Natural killer cell (primary cell): ENCODE measurements at regions of chr19 and their contacts with region 1.

Region 1: DNA sequence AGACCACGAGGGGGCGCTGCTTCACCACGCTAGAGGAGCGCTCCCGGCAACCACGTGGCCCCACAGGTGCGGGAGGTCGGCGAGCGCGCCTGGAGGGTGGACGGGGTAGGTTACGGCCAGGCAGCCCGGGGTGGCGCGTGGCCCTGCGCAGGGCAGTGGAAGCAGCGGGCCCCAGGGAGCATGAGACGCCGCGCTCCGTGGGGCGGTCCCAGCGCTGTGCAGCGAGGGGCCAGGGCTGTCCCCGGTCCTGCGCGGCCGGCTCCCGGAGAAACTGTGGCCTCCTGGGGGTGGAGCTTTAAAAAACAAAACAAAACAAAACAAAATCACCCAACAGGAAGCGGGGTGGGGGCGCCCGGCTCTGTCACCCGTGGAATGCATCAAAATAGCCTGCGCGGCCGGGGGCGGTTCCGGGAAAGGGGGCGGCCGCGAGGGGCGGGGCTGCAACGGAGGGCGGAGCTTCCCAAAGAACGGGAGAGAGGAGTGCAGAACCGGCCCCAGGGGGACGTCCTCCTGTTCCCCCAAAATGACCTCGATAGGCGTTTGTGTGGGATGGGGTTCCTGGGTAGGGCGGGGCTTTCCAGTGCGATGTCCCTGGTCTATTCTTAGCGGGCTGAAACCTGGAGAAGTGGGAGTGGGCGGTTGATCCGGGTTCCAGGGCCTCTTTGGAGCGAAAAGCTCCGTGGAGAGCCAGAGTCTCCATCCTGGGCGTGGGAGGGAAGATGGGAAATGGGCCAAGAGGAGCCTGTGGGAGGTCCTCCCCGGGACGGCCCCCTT is 27.3 kb downstream of the NUMBL start:
- DNase-seq: peak; percentile 95 to 96
- ATAC-seq: peak; percentile 83 to 96 (median 89)
- H3K4me3 ChIP-seq: peak overlapping the region; percentile 55
- H3K4me3 Mint-ChIP-seq: peak overlapping the region; percentile 85
- H3K27ac ChIP-seq: peak overlapping the region; percentile 52
- H3K27ac Mint-ChIP-seq: peak overlapping the region; percentile 60 to 83
- H3K4me1 ChIP-seq: peaks cover 15% of the 10 kb centered on the region
- H3K4me1 Mint-ChIP-seq: peaks cover 0 to 17% of the 10 kb centered on the region in 2 donors
- H3K27me3 ChIP-seq: no peaks in the 10 kb centered on the region
- H3K27me3 Mint-ChIP-seq: no peaks in the 10 kb centered on the region
- CTCF ChIP-seq: peak; percentile 42

Region 2: DNA sequence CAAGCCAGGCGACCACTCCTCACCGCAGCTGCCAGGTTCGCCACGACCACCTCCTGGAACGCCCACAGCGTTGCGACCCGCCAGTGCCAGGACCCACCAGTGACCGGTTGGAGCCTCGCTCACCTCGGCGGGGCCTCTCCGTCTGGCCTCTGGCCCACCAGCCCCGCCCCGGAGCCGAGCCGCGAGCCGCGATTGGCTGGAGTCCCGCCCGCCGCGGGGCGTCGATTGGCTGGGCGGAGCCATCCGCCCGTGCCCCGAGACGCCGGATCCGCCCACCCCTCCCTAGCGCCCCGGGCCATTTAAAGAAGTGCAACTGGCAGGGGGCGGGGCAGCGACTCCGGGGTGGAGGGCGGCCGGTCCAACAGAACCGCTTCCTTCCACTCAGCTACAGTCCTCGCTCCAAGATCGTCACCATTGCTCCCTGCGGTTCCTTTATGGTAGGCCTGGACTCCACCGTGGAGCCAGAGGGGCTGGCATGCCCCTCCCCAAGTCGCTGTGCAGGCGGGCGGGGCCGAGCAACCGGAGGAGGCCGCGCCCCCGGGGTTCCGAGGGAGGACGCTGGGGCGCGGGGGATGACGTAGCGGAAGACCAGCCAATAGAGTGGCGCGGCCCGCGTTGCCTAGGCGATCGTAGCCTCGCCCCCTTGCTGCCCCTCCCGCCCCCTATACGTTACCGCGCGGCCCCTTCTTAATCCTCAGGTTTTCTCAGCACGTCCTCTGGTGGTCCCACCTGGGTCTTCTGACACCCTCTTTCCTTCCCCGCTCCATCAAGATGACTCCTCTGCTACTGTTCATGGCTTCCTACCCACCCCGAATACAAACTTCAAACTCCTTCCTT is 218.7 kb before region 1 on chr19 and contains the start of gene SERTAD3:
- intact Hi-C with region 1: no loop called
- DNase-seq: peak; percentile 98
- ATAC-seq: peak; percentile 70 to 87 (median 74)
- H3K4me3 ChIP-seq: peak within 1 kb of the TSS; percentile 91
- H3K4me3 Mint-ChIP-seq: peak within 1 kb of the TSS; percentile 98
- H3K27ac ChIP-seq: peak within 1 kb of the TSS; percentile 89
- H3K27ac Mint-ChIP-seq: peak within 1 kb of the TSS; percentile 92 to 97
- H3K4me1 ChIP-seq: peaks cover 13% of the 10 kb centered on the region
- H3K4me1 Mint-ChIP-seq: peaks cover 25 to 29% of the 10 kb centered on the region in 2 donors
- H3K27me3 ChIP-seq: no peaks in the 10 kb centered on the region
- H3K27me3 Mint-ChIP-seq: no peaks in the 10 kb centered on the region
- CTCF ChIP-seq: no peak
- total RNA-seq, gene SERTAD3: 57.3 to 102 (median 83.3) TPM

Region 3: DNA sequence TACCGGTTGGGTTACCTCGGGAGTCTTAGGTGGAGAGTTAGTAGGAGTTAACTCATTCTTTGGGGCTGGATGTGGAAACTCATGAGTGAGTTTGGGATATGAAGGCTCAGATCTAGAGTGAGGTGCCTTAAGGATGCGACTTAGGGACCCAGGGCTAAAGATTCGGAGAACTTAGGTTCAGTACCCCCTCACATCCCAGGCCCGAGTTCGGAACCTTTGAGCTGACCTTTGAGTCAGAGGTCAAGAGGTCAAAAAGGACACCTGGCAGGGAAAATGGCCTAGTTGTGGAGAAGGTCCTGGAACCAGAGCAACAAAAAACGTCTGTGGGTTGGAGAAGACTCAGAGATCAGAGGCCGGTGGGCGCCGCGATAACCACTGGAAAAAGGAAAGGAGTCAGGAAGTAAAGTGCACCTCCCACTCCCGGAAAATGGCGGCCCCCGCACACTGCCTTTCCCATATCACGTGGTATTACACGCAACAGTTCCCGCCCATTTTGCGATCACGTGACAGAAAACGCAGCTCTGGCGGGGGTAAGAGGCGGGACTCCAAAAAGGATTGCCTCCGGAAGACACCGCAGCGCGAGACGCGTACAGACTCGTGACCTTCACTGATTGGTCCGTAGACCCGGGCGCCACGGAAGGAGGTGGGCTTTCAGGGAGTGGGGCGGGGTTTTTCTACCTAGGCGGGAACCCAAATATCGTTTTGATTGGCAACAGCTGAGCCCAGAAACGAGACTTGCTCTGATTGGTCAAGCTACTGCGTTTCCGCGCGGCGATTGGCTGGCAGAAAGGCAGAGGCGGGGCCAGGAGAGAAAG is 87.2 kb after region 1 on chr19 and contains the start of gene ACTMAP:
- intact Hi-C with region 1: loop called (anchors 2 kb)
- DNase-seq: peak; percentile 100
- ATAC-seq: peak; percentile 87 to 96 (median 88)
- H3K4me3 ChIP-seq: peak within 1 kb of the TSS; percentile 73
- H3K4me3 Mint-ChIP-seq: peak within 1 kb of the TSS; percentile 99
- H3K27ac ChIP-seq: peak within 1 kb of the TSS; percentile 92
- H3K27ac Mint-ChIP-seq: peak within 1 kb of the TSS; percentile 92 to 95
- H3K4me1 ChIP-seq: peaks cover 52% of the 10 kb centered on the region
- H3K4me1 Mint-ChIP-seq: peaks cover 43 to 53% of the 10 kb centered on the region in 2 donors
- H3K27me3 ChIP-seq: no peaks in the 10 kb centered on the region
- H3K27me3 Mint-ChIP-seq: no peaks in the 10 kb centered on the region
- CTCF ChIP-seq: no peak
- total RNA-seq, gene ACTMAP: 5.9 to 9.6 (median 8.2) TPM

Region 4: DNA sequence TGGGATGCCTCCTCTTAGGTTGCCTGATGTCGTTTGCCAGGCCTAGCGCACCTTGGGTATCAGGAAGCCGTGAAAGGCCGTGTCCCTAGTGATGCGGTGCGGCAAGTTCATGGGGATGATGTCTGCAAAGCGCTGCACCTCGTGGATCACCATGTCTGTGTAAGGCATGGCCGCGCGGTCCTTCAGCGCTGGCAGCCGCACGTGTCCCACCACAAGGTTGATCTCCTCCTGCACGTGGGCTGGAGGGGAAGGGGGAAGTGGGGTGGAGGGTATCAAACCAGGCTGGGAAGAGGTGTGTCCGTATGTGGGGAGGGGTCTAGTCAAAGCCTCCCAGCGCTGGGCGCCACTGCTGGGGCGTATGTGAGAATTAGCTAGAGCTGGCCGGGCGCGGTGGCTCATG is 159.1 kb after region 1 on chr19:
- intact Hi-C with region 1: loop called (anchors 1 kb)
- DNase-seq: peak in 1 of 2 donors; percentile 7
- ATAC-seq: no peak
- H3K4me3 ChIP-seq: no peak overlapping the region
- H3K4me3 Mint-ChIP-seq: no peak overlapping the region
- H3K27ac ChIP-seq: no peak overlapping the region
- H3K27ac Mint-ChIP-seq: peak overlapping the region in 1 of 2 donors; percentile 92
- H3K4me1 ChIP-seq: peaks cover 69% of the 10 kb centered on the region
- H3K4me1 Mint-ChIP-seq: peaks cover 55 to 60% of the 10 kb centered on the region in 2 donors
- H3K27me3 ChIP-seq: no peaks in the 10 kb centered on the region
- H3K27me3 Mint-ChIP-seq: no peaks in the 10 kb centered on the region
- CTCF ChIP-seq: no peak

Region 5: GRCh38 chr19:40974633-40975037 is 311.5 kb after region 1 on chr19:
- intact Hi-C with region 1: loop called (anchors 10 kb)
- DNase-seq: peak; percentile 71 to 94
- ATAC-seq: peak; percentile 83 to 94 (median 93)
- H3K4me3 ChIP-seq: no peak overlapping the region
- H3K4me3 Mint-ChIP-seq: no peak overlapping the region
- H3K27ac ChIP-seq: no peak overlapping the region
- H3K27ac Mint-ChIP-seq: no peak overlapping the region
- H3K4me1 ChIP-seq: peaks cover 9% of the 10 kb centered on the region
- H3K4me1 Mint-ChIP-seq: peaks cover 10 to 13% of the 10 kb centered on the region in 2 donors
- H3K27me3 ChIP-seq: no peaks in the 10 kb centered on the region
- H3K27me3 Mint-ChIP-seq: peaks cover 6 to 15% of the 10 kb centered on the region in 2 donors
- CTCF ChIP-seq: peak; percentile 91

Region 6: GRCh38 chr19:41144403-41144802 is 481.3 kb after region 1 on chr19:
- intact Hi-C with region 1: loop called (anchors 1 kb)
- DNase-seq: peak; percentile 83 to 95
- ATAC-seq: peak; percentile 93 to 99 (median 97)
- H3K4me3 ChIP-seq: no peak overlapping the region
- H3K4me3 Mint-ChIP-seq: no peak overlapping the region
- H3K27ac ChIP-seq: no peak overlapping the region
- H3K27ac Mint-ChIP-seq: no peak overlapping the region
- H3K4me1 ChIP-seq: no peaks in the 10 kb centered on the region
- H3K4me1 Mint-ChIP-seq: no peaks in the 10 kb centered on the region
- H3K27me3 ChIP-seq: no peaks in the 10 kb centered on the region
- H3K27me3 Mint-ChIP-seq: peaks cover 10 to 21% of the 10 kb centered on the region in 2 donors
- CTCF ChIP-seq: peak; percentile 86